Heart right ventricle (tissue), 16 donors: ENCODE measurements at regions of chr6 and their contacts with region 1.

Region 1: DNA sequence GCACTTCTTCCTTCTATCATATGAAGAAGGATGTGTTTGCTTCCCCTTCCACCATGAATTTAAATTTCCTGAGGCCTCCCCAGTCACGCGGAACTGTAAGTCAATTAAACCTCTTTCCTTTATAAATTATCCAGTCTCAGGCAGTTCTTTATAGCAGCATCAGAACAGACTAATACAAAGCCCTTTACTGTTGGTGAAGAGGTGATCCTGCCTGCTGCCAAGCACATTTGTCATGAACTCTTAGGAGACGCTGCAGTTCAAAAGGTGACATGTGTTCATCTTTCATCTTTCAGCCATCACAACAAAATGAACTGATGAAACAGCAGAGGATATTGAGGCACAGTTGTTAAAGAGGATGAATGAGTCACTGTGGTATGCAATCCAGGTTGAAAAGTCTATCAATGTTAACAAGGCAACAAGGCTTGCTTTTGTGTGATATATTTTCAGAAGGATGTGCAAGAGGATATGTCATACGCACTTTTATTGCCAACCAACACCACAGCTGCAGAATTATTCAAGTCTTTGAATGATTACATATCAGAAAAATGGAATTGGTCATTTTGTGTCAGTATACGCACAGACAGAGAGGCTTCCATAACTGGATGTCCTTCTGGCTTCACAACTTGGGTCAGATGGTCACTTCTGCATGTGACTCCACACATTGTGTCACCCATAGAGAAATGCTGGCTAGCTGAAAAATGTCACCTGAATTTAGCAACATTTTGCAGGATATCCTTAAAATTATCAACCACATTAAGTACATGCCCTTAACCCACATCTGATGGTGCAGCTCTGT is 52.4 kb upstream of the PLN start:
- DNase-seq: no peak
- ATAC-seq: no peak
- H3K4me3 ChIP-seq: no peak overlapping the region
- H3K27ac ChIP-seq: no peak overlapping the region
- H3K4me1 ChIP-seq: peaks cover 0 to 12% (median 0%) of the 10 kb centered on the region in 9 donors
- H3K27me3 ChIP-seq: no peaks in the 10 kb centered on the region
- CTCF ChIP-seq: no peak

Region 2: DNA sequence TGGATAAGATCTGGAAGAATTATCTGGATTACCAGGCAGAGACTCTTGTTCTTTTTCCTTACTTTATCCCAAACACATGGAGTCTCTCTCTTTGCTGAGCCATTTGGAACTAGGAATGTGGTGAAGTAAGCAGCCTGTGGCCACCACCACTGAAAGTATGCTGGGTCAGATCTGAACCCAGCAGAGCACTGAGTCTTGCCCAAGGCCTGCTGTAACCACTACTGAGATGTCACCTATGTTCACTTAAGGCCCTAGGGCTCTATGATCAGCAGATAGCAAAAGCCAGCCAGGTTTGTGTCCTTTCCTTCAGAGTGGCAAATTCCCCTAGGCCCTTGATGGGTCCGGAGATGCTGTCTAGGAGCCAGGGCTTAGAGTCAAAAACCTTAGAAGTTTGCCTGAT is 50.9 kb before region 1 on chr6:
- intact Hi-C with region 1: no loop called
- DNase-seq: no peak
- ATAC-seq: no peak
- H3K4me3 ChIP-seq: no peak overlapping the region
- H3K27ac ChIP-seq: no peak overlapping the region
- H3K4me1 ChIP-seq: no peaks in the 10 kb centered on the region
- H3K27me3 ChIP-seq: no peaks in the 10 kb centered on the region
- CTCF ChIP-seq: no peak

Region 3: GRCh38 chr6:118476551-118476950 is 19.1 kb before region 1 on chr6:
- intact Hi-C with region 1: loop called in 2 of 10 experiments (anchors 1 to 2 kb)
- DNase-seq: no peak
- ATAC-seq: peak in 5 of 8 donors; percentile 52 to 83 (median 76)
- H3K4me3 ChIP-seq: no peak overlapping the region
- H3K27ac ChIP-seq: peak overlapping the region in 9 of 10 donors; percentile 8 to 66 (median 35)
- H3K4me1 ChIP-seq: peaks cover 0 to 26% (median 11%) of the 10 kb centered on the region in 9 donors
- H3K27me3 ChIP-seq: no peaks in the 10 kb centered on the region
- CTCF ChIP-seq: no peak